CD14-positive monocyte (primary cell): ENCODE measurements at regions of chr12 and their contacts with region 1.

Region 1: GRCh38 chr12:66087365-66087943 is 43.1 kb downstream of the LLPH start:
- DNase-seq: peak; percentile 41 to 58 (median 49)
- H3K4me3 ChIP-seq: no peak overlapping the region
- H3K4me3 Mint-ChIP-seq: no peak overlapping the region
- H3K27ac ChIP-seq: no peak overlapping the region
- H3K27ac Mint-ChIP-seq: no peak overlapping the region
- H3K4me1 ChIP-seq: no peaks in the 10 kb centered on the region
- H3K4me1 Mint-ChIP-seq: peaks cover 5% of the 10 kb centered on the region
- H3K27me3 ChIP-seq: no peaks in the 10 kb centered on the region
- H3K27me3 Mint-ChIP-seq: peaks cover 0 to 3% (median 0%) of the 10 kb centered on the region in 3 donors
- CTCF ChIP-seq: peak; percentile 72

Region 2: DNA sequence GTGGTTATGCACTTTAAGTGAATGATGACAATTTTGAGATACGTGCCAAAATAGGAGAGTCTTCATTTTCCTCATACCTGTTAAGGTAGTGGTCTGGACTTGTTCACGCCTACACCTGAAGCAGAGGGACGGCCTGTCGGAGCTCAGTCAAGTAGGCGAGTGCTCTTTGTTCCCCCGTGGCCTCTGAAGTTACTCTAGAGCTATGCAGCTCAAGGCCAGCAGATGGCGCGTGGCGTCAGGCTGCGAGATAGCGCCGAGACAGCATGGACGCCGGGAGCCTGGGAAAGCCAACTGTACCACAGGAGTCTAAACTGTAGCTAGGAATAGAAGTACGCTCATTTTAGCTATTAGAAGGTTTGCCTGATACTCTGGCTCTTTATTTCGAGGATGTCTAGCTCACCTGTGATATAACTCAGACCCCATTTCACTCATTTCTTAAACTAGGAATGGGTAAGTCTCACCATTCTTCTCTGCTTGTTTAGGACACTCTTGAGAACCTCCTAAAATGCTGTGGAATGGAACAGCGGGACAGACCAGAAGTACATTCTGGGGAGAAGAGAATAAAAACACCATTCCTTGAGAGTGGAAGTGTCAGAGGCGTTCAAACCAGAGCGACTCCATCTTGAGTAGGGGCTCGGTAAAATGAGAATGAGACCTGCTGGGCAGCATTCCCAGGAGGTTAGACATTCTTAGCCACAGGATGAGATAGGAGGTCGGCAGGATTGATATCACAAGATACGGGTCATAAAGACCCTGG is 530.6 kb before region 1 on chr12:
- intact Hi-C with region 1: loop called in 1 of 2 experiments (anchors 10 kb)
- DNase-seq: peak; percentile 40 to 57 (median 47)
- H3K4me3 ChIP-seq: no peak overlapping the region
- H3K4me3 Mint-ChIP-seq: no peak overlapping the region
- H3K27ac ChIP-seq: no peak overlapping the region
- H3K27ac Mint-ChIP-seq: no peak overlapping the region
- H3K4me1 ChIP-seq: no peaks in the 10 kb centered on the region
- H3K4me1 Mint-ChIP-seq: peaks cover 17% of the 10 kb centered on the region
- H3K27me3 ChIP-seq: no peaks in the 10 kb centered on the region
- H3K27me3 Mint-ChIP-seq: peaks cover 0 to 4% (median 0%) of the 10 kb centered on the region in 3 donors
- CTCF ChIP-seq: peak; percentile 87

Region 3: DNA sequence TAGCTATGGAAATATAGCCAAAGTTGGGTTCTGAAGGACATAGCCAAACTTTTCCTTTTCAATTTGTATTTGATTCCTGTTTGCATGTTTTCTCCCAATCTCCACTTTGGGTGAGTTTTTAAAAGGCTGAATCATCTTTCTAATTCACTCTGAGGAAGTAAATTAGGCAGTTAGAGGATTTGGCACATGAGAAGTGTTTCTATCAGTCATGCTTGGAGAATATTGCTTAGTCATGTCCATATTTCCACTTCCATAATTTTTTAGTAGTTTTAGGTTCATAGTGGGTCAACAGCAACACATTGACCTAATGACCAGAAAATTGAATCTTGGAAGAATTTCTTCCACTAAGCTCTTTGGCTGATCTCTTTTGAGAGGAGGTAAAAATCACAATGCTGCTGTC is 123.4 kb after region 1 on chr12:
- intact Hi-C with region 1: no loop called
- DNase-seq: peak; percentile 48 to 77 (median 72)
- H3K4me3 ChIP-seq: peak overlapping the region in 1 of 3 experiments; percentile 38
- H3K4me3 Mint-ChIP-seq: no peak overlapping the region
- H3K27ac ChIP-seq: peak overlapping the region in 1 of 2 donors; percentile 54
- H3K27ac Mint-ChIP-seq: peak overlapping the region; percentile 58 to 87 (median 83)
- H3K4me1 ChIP-seq: peaks cover 23 to 39% of the 10 kb centered on the region in 2 donors
- H3K4me1 Mint-ChIP-seq: peaks cover 53% of the 10 kb centered on the region
- H3K27me3 ChIP-seq: no peaks in the 10 kb centered on the region
- H3K27me3 Mint-ChIP-seq: no peaks in the 10 kb centered on the region
- CTCF ChIP-seq: no peak